ENCODE measurements at regions of chr10 and their contacts with region 1.

Region 1: DNA sequence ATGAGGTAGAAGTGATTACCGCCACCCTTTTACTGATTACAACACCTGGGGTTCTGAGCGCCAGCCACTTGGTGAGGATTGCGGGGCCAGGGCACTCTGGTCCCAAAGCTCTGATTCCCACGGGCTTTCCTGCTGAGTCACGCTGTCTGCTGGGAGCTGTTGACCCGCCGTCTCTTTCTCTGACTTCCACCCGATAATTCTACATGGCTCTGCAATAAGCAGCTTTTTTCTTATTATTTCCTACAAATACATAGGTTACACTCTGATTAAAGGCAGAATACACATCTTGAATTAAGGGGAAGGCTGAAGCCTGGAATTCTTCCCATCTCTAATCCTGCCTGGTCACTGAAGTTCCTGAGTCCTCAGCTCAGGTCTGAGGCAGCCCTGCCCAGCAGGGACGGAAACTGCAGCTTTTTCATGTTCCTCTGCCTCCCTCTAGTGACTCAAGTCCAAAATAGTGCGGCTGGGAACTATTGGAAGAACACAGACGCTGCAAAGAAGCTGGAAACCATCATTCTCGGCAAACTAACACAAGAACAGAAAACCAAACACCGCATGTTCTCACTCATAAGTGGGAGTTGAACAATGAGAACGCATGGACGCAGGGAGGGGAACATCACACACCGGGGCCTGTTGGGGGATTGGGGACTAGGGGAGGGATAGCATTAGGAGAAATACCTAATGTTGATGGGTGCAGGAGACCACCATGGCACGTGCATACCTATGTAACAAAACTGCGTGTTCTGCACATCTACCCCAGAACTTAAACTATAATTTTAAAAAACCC is 178.3 kb downstream of the PRKCQ start:
- DNase-seq: peak; percentile 71
- H3K4me3 Mint-ChIP-seq: no peak overlapping the region
- H3K27ac Mint-ChIP-seq: no peak overlapping the region
- H3K4me1 Mint-ChIP-seq: peaks cover 37% of the 10 kb centered on the region
- H3K27me3 Mint-ChIP-seq: peaks cover 28% of the 10 kb centered on the region

Region 2: DNA sequence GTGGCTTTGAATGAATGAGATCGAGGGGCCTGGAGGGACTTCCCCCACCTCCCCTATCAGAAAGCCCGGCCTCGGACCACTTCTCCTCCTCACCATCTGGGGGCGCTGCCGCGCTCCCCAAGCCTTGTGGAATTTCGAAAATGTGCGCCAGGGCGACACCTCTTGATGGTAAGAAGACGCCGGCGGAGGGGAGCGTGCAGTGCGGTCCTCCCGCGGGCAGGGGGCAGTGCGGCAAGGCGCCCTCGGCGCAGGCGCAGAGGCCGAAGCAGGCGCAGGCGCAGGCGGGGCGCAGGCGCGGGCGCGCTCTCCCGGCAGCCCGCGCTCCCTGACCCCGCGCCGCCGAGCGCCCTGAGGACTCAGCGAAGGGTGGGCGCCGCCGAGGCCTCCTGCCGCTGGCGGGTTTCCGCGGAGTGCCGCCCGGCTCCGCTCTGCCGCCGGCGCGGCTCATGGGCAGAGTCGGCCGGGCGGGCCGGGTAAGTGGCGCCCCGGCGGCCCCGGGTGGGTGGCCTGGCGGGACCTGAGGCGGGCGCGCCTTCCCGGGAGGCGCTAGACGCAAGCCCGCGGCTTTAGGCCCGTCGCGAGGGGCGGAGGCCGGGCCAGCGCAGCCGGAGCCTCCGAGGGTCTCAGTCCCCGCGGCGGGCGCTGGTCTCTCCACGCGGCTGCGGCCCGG is 312.9 kb before region 1 on chr10 and contains the start of gene RBM17:
- CTCF ChIA-PET with region 1: interaction called, 20 read pairs
- DNase-seq: peak; percentile 96
- H3K4me3 Mint-ChIP-seq: peak within 1 kb of the TSS; percentile 98
- H3K27ac Mint-ChIP-seq: peak within 1 kb of the TSS; percentile 75
- H3K4me1 Mint-ChIP-seq: peaks cover 74% of the 10 kb centered on the region
- H3K27me3 Mint-ChIP-seq: peaks cover 4% of the 10 kb centered on the region

Region 3: DNA sequence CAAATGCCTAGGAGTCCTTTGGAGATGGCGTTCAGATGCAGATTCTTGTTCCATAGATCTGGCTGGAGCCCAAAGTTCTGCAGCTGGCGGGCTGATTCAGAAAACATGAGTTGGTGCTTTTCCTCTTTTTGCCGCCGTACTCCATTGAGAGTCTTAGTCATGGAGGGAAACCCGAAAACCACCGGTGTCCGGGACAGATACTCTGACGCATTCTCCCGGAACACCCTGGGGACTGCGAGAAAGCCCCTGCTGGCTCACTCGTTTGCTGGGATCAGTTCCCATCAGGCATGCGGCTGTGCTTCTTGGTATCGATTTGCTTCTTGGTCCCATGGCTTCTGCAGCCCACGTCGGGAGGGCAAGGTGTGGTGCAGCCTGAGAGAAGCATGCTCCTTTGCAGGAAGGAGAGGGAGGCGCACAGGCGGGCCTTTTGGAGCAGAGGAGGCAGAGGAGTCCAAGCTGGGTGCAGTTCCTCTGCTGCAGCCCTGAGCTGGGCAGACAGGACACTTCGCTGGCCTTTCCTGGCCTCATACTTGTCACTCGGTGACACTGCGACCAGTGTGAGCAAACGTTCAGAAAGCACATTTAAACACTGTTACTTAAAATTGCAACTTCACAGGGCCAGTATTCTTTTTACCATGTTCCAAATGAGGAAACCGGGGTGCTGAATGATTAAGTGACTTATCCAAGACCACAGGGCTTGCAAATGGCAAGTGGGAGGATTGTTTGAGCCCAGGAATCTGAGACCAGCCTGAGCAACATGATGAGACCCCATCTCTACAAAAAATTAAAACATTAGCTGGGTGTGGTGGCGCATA is 229.7 kb before region 1 on chr10:
- CTCF ChIA-PET with region 1: interaction called, 32 read pairs
- DNase-seq: no peak
- H3K4me3 Mint-ChIP-seq: no peak overlapping the region
- H3K27ac Mint-ChIP-seq: no peak overlapping the region
- H3K4me1 Mint-ChIP-seq: peaks cover 84% of the 10 kb centered on the region
- H3K27me3 Mint-ChIP-seq: no peaks in the 10 kb centered on the region

Region 4: GRCh38 chr10:6202684-6203330 is 198.9 kb before region 1 on chr10 and contains the start of gene PFKFB3:
- CTCF ChIA-PET with region 1: interaction called, 184 read pairs
- DNase-seq: peak; percentile 94
- H3K4me3 Mint-ChIP-seq: peak within 1 kb of the TSS; percentile 94
- H3K27ac Mint-ChIP-seq: peak within 1 kb of the TSS; percentile 95
- H3K4me1 Mint-ChIP-seq: peaks cover 41% of the 10 kb centered on the region
- H3K27me3 Mint-ChIP-seq: peaks cover 3% of the 10 kb centered on the region

Region 5: DNA sequence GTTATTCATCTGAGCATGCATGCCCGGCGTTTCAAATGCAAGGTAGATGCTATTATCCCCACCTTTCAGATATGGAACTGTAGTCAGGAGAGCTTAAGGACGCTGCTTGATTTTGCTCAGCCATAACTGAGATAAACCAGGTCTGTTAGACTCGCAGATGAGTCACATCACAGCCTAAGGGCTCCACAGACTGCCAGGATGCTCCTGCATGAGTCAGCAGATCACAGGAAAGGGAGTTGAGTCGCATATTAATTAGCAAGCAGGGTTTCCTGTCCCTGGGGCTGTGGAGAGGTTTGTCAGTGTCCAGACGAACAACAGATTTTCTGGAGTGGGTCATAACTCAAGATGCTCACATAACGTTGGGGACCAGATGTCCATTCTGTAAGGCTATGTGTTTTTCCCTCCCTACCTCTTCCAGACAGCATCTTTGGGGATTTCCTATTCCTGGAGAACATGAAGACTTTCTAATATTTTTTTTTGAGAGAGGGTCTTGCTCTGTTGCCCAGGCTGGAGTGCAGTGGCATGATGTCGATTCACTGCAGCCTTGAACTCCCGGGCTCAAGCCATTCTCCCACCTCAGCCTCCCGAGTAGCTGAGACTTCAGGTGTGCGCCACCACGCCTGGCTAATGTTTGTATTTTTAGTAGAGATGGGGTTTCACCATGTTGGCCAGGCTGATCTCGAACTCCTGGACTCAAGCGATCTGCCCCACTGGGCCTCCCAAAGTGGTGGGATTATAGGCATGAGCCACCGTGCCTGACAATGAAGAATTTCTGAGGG is 162.4 kb before region 1 on chr10:
- CTCF ChIA-PET with region 1: interaction called, 11 read pairs
- DNase-seq: peak; percentile 71
- H3K4me3 Mint-ChIP-seq: no peak overlapping the region
- H3K27ac Mint-ChIP-seq: peak overlapping the region; percentile 13
- H3K4me1 Mint-ChIP-seq: peaks cover 39% of the 10 kb centered on the region
- H3K27me3 Mint-ChIP-seq: no peaks in the 10 kb centered on the region

Region 6: GRCh38 chr10:6348096-6348874 is 53.5 kb before region 1 on chr10:
- CTCF ChIA-PET with region 1: interaction called, 31 read pairs
- DNase-seq: peak; percentile 89
- H3K4me3 Mint-ChIP-seq: peak overlapping the region; percentile 61
- H3K27ac Mint-ChIP-seq: peak overlapping the region; percentile 99
- H3K4me1 Mint-ChIP-seq: peaks cover 64% of the 10 kb centered on the region
- H3K27me3 Mint-ChIP-seq: peaks cover 8% of the 10 kb centered on the region

Region 7: DNA sequence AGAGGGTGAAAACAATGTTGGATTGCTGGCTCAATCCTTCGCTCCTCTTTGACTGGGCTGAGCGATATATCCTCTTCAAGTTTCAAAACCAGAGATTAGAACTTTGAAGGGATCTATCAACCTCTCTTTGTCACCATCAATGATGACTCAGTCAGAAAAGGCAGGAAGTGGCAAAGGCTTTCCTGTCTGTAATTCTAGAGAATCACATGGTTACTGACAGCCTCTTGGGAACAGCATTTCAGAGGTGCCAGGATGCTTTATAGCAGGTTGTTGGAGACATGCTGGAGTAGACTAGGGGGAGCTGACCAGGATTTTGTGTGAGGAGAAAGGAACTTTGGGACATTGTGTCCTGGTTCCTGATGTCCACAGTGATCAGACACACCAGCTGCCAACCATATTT is 97.0 kb after region 1 on chr10:
- CTCF ChIA-PET with region 1: no interaction called
- DNase-seq: peak; percentile 57
- H3K4me3 Mint-ChIP-seq: peak overlapping the region; percentile 36
- H3K27ac Mint-ChIP-seq: peak overlapping the region; percentile 88
- H3K4me1 Mint-ChIP-seq: peaks cover 45% of the 10 kb centered on the region
- H3K27me3 Mint-ChIP-seq: no peaks in the 10 kb centered on the region

Region 8: GRCh38 chr10:6563075-6563474 is 161.3 kb after region 1 on chr10:
- CTCF ChIA-PET with region 1: no interaction called
- DNase-seq: peak; percentile 68
- H3K4me3 Mint-ChIP-seq: peak overlapping the region; percentile 68
- H3K27ac Mint-ChIP-seq: peak overlapping the region; percentile 92
- H3K4me1 Mint-ChIP-seq: peaks cover 94% of the 10 kb centered on the region
- H3K27me3 Mint-ChIP-seq: no peaks in the 10 kb centered on the region

Region 9: GRCh38 chr10:6667679-6668270 is 266.0 kb after region 1 on chr10:
- CTCF ChIA-PET with region 1: interaction called, 14 read pairs
- DNase-seq: peak; percentile 71
- H3K4me3 Mint-ChIP-seq: no peak overlapping the region
- H3K27ac Mint-ChIP-seq: no peak overlapping the region
- H3K4me1 Mint-ChIP-seq: peaks cover 30% of the 10 kb centered on the region
- H3K27me3 Mint-ChIP-seq: peaks cover 17% of the 10 kb centered on the region